Ascending aorta (tissue), 2 donors: ENCODE measurements at regions of chr1 and their contacts with region 1.

Region 1: GRCh38 chr1:6554031-6554906 is at the start of gene NOL9:
- DNase-seq: peak; percentile 73 to 96
- H3K4me3 ChIP-seq: peak within 1 kb of the TSS; percentile 65 to 98
- H3K27ac ChIP-seq: peak within 1 kb of the TSS; percentile 66 to 70
- H3K4me1 ChIP-seq: peaks cover 9 to 20% of the 10 kb centered on the region in 2 donors
- H3K27me3 ChIP-seq: no peaks in the 10 kb centered on the region
- CTCF ChIP-seq: peak; percentile 96 to 97 (median 97)
- total RNA-seq, gene NOL9: 31.0 TPM

Region 2: DNA sequence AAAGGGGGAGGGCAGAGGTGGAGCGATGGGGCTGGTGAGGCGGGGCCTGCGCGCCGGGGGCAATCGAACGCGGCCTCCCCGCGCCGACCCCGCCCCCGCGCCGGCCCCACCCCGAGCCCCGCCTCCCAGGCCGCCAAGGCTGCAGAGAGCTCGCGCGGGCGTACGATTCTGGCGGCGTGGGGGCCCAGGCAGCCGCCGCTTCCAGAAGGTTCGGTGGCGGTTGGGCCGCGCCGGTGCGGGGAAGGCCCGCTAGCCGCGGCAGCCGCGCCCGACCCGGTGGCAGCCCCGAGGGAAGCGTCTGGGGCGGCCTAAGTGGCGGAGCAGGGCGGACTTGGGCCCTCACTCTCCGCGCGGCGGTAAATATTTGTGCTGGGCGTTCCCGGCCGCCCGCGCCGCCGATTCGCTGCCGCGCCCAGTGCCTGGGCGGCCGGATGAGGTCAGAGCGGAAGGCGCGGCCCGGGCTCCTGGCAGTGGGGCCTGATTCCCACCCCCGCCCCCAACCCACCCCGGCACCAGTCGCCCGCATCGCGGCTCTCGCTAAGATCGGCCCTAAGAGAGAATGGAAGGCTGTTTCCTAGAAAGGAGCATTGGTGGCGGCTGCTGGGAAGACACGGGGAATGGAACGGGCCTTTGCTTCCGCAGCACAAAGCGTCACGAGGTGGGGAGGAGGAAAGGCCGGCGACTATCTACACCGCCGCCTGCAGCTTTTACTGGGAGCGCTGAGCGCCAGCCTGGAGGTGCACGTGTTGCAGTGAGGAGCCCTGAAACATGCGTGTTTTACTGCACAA is 160.7 kb before region 1 on chr1 and contains the start of gene ACOT7:
- intact Hi-C with region 1: loop called (anchors 10 kb)
- DNase-seq: peak; percentile 49 to 92
- H3K4me3 ChIP-seq: peak within 1 kb of the TSS; percentile 66 to 84
- H3K27ac ChIP-seq: peak within 1 kb of the TSS; percentile 95 to 99
- H3K4me1 ChIP-seq: peaks cover 4 to 13% of the 10 kb centered on the region in 2 donors
- H3K27me3 ChIP-seq: no peaks in the 10 kb centered on the region
- CTCF ChIP-seq: peak; percentile 4 to 46 (median 7)
- total RNA-seq, gene ACOT7: 16.1 TPM

Region 3: DNA sequence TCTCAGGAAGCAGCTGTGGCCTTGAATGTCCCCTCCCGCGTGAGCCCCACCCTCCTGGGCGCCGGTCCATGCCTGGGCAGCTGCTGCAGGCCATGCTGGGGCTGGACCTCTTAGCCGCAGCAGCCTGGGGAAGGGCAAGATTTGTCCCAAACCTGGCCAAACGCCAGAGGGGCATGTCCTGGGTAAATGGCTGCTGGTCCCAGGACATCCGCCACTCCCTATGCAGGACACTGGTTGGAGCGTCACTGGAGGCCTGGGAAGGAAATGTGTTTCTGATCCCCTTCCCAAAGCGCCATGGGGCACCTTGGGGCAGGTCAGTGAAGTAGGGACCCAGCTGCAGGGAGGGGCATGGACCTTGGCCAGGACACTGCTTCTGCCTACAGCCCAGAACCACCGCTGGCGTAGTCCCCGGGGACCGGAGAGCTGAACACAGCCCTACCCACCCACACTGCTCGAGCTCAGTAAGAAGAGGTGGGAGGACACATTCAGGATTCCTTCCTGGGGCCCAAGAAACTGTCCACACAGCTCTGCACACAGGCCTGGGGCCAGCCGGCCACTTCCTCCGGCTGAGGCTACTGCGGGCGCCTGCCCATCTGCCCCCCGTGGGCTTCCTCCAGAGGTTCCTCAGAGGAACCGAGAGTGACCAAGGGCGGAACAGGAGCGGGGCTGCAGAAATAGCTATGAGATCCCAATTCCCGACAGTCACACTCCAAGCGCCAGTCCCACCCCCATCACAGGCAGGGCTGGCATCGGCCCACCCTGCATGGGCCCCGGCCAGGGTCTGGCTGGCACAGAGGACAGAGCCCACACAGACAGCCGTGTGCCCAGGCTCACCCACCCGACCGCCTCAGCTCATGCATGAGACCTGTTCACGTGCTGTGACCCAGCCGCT is 52.0 kb before region 1 on chr1:
- intact Hi-C with region 1: loop called (anchors 1 kb)
- DNase-seq: peak in 1 of 2 donors; percentile 83
- H3K4me3 ChIP-seq: peak overlapping the region in 1 of 2 donors; percentile 0
- H3K27ac ChIP-seq: peak overlapping the region; percentile 79 to 80
- H3K4me1 ChIP-seq: peaks cover 19 to 48% of the 10 kb centered on the region in 2 donors
- H3K27me3 ChIP-seq: no peaks in the 10 kb centered on the region
- CTCF ChIP-seq: no peak

Region 4: GRCh38 chr1:6591222-6591621 is 37.0 kb after region 1 on chr1:
- intact Hi-C with region 1: loop called (anchors 5 kb)
- DNase-seq: peak; percentile 69 to 88
- H3K4me3 ChIP-seq: peak overlapping the region; percentile 8 to 26
- H3K27ac ChIP-seq: peak overlapping the region; percentile 82 to 86
- H3K4me1 ChIP-seq: peaks cover 18 to 57% of the 10 kb centered on the region in 2 donors
- H3K27me3 ChIP-seq: no peaks in the 10 kb centered on the region
- CTCF ChIP-seq: no peak

Region 5: DNA sequence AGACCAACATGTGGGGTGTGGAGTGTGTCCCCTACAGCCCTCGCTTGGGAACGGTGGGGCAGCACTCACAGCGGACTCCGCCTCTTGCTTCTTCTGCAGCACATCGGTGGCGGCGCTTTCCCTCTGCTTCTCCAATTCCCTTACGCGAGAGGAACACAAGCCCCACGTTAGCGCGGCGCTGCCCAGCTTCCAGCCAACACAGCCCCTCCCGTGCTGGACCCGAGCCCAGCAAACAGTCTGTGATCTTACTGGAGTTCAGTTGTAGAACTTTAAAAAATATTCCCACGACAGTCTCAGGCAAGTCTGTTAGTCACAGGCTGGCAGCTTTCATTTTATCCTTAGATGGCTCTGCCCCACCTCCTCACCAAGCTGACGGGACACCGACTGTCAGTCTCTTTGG is 84.0 kb after region 1 on chr1:
- intact Hi-C with region 1: loop called (anchors 2 kb)
- DNase-seq: peak; percentile 82 to 96
- H3K4me3 ChIP-seq: peak overlapping the region in 1 of 2 donors; percentile 44
- H3K27ac ChIP-seq: peak overlapping the region; percentile 80 to 94
- H3K4me1 ChIP-seq: peaks cover 2 to 13% of the 10 kb centered on the region in 2 donors
- H3K27me3 ChIP-seq: no peaks in the 10 kb centered on the region
- CTCF ChIP-seq: no peak

Region 6: GRCh38 chr1:6701437-6702153 is 147.3 kb after region 1 on chr1 and contains the start of gene DNAJC11:
- intact Hi-C with region 1: loop called (anchors 2 kb)
- DNase-seq: peak; percentile 30 to 92
- H3K4me3 ChIP-seq: peak within 1 kb of the TSS; percentile 90 to 96
- H3K27ac ChIP-seq: peak within 1 kb of the TSS; percentile 55 to 77
- H3K4me1 ChIP-seq: peaks cover 12 to 15% of the 10 kb centered on the region in 2 donors
- H3K27me3 ChIP-seq: no peaks in the 10 kb centered on the region
- CTCF ChIP-seq: peak; percentile 47 to 100 (median 54)
- total RNA-seq, gene DNAJC11: 12.9 TPM

Region 7: DNA sequence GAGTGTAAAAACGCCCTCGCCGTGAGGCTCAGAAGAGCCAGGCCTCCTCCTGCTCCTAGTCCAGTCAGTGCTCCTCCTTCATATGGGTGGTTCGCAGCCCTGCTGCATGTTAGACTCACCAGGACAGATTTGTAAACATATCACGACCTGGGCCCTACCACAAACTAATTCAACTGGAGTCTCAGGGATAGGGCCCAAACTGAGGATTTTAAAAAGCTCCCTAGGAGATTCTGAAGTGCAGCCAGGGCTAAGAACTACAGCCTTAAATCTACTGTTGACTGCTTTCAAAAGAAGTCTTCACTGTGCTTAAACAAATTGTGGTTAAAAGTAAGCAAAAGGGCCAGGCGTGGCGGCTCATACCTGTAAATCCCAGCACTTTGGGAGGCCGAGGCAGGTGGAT is 288.0 kb after region 1 on chr1:
- intact Hi-C with region 1: no loop called
- DNase-seq: no peak
- H3K4me3 ChIP-seq: no peak overlapping the region
- H3K27ac ChIP-seq: no peak overlapping the region
- H3K4me1 ChIP-seq: no peaks in the 10 kb centered on the region
- H3K27me3 ChIP-seq: no peaks in the 10 kb centered on the region
- CTCF ChIP-seq: no peak